Mammary epithelial cell (primary cell): ENCODE measurements at regions of chr14 and their contacts with region 1.

Region 1: GRCh38 chr14:49828640-49829039 is 23.9 kb downstream of the NEMF start:
- DNase-seq: no peak
- H3K4me3 ChIP-seq: no peak overlapping the region
- H3K27ac ChIP-seq: no peak overlapping the region
- H3K4me1 ChIP-seq: no peaks in the 10 kb centered on the region
- H3K27me3 ChIP-seq: no peaks in the 10 kb centered on the region
- CTCF ChIP-seq: no peak

Region 2: DNA sequence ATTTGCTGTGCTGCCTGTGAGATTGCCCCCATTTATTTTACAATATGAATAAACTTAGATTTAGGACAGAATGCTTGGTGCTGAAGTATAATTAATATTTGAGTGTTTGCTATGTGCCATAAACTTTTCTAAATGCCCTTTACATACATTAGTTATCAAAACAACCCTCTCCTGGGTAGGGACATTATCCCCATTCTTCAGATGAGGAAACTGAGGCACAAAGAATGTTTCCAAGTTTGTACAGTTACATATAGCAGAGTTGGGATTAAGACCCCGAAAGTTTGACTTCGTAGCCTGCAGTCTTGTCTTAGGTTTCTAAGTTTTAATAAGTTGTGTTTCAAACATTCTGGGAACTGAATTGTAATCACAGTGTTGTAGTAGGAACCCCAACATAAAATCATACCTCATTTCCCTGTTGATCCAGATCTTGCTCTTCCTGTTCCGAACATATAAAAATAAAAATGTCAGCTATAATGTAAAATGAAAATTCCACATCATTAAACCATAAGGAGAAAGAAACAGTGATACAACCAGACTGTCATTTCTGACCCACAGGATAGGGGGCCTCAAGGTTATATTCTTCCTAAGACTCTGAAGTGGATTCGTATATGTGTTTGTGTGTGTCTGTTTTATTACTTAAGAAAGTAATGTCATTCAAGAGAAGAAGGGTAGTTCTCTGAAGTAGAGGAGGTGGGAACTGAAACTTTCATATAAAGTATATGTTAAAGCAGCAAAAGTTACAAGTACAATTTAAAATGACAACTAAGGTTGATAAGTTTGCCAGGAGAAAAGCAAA is 42.1 kb before region 1 on chr14:
- CTCF ChIA-PET with region 1: no interaction called
- dilution Hi-C with region 1: no loop called
- in situ Hi-C with region 1: loop called in 1 of 2 experiments (anchors 10 kb)
- intact Hi-C with region 1: no loop called
- DNase-seq: no peak
- H3K4me3 ChIP-seq: no peak overlapping the region
- H3K27ac ChIP-seq: no peak overlapping the region
- H3K4me1 ChIP-seq: no peaks in the 10 kb centered on the region
- H3K27me3 ChIP-seq: no peaks in the 10 kb centered on the region
- CTCF ChIP-seq: no peak

Region 3: GRCh38 chr14:49796025-49796424 is 32.6 kb before region 1 on chr14:
- CTCF ChIA-PET with region 1: no interaction called
- dilution Hi-C with region 1: no loop called
- in situ Hi-C with region 1: no loop called
- intact Hi-C with region 1: loop called (anchors 5 kb)
- DNase-seq: peak; percentile 3
- H3K4me3 ChIP-seq: no peak overlapping the region
- H3K27ac ChIP-seq: no peak overlapping the region
- H3K4me1 ChIP-seq: no peaks in the 10 kb centered on the region
- H3K27me3 ChIP-seq: no peaks in the 10 kb centered on the region
- CTCF ChIP-seq: no peak